Adrenal gland (tissue), 19 donors: ENCODE measurements at regions of chr4 and their contacts with region 1.

Region 1: GRCh38 chr4:165207431-165208220 is at the start of gene KLHL2:
- DNase-seq: peak; percentile 79 to 88 (median 85)
- H3K4me3 ChIP-seq: peak within 1 kb of the TSS; percentile 16 to 99 (median 46)
- H3K27ac ChIP-seq: peak within 1 kb of the TSS in 4 of 5 donors; percentile 83 to 97 (median 87)
- H3K4me1 ChIP-seq: peaks cover 5 to 16% of the 10 kb centered on the region in 2 donors
- H3K27me3 ChIP-seq: no peaks in the 10 kb centered on the region
- CTCF ChIP-seq: no peak
- POLR2A ChIP-seq: peak; percentile 84 to 87
- total RNA-seq, gene KLHL2: 19.1 to 45.5 (median 26.2) TPM

Region 2: GRCh38 chr4:165327211-165328100 is 119.8 kb after region 1 on chr4 and contains the start of gene MSMO1:
- intact Hi-C with region 1: loop called (anchors 10 kb)
- DNase-seq: peak; percentile 99 to 100 (median 99)
- H3K4me3 ChIP-seq: peak within 1 kb of the TSS; percentile 74 to 94 (median 80)
- H3K27ac ChIP-seq: peak within 1 kb of the TSS; percentile 78 to 90 (median 86)
- H3K4me1 ChIP-seq: peaks cover 17 to 40% of the 10 kb centered on the region in 2 donors
- H3K27me3 ChIP-seq: no peaks in the 10 kb centered on the region
- CTCF ChIP-seq: no peak
- POLR2A ChIP-seq: peak; percentile 43 to 97
- total RNA-seq, gene MSMO1: 41.9 to 2,076 (median 58.1) TPM

Region 3: DNA sequence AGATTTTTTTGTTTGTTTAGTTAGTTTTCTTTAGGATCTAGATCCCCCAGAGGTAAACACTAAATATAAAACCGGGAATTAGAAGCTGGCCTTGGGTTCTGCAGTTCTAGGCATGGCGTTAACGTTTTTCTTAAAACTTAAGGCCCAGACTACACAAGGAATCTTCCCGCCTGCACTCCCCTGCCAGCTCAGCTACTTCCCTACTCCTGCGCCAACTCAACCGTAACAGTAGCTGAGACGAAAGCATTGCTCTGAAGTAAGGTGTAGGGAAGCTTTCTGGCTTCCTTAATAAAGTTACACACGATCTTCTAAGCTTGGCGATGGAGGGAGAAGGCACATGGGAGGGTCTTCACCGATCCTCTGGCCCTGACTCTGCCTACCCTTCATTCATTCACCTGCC is 208.3 kb after region 1 on chr4:
- intact Hi-C with region 1: no loop called
- DNase-seq: no peak
- H3K4me3 ChIP-seq: no peak overlapping the region
- H3K27ac ChIP-seq: no peak overlapping the region
- H3K4me1 ChIP-seq: no peaks in the 10 kb centered on the region
- H3K27me3 ChIP-seq: no peaks in the 10 kb centered on the region
- CTCF ChIP-seq: no peak
- POLR2A ChIP-seq: no peak